HEK293 (cell line): ENCODE measurements at regions of chr6 and their contacts with region 1.

Region 1: GRCh38 chr6:36759148-36759759 is 61.6 kb downstream of the RAB44 start:
- H3K4me3 ChIP-seq: no peak overlapping the region
- H3K27ac ChIP-seq: no peak overlapping the region
- H3K4me1 ChIP-seq: no peaks in the 10 kb centered on the region; the same call in 1 of the 2 replicates
- CTCF ChIP-seq: peak; percentile 66

Region 2: GRCh38 chr6:36219081-36219480 is 540.2 kb before region 1 on chr6:
- CTCF ChIA-PET with region 1: no interaction called
- POLR2A ChIA-PET with region 1: no interaction called
- H3K4me3 ChIP-seq: no peak overlapping the region
- H3K27ac ChIP-seq: no peak overlapping the region
- H3K4me1 ChIP-seq: no peaks in the 10 kb centered on the region
- CTCF ChIP-seq: no peak

Region 3: GRCh38 chr6:36340618-36341454 is 418.4 kb before region 1 on chr6:
- CTCF ChIA-PET with region 1: no interaction called
- POLR2A ChIA-PET with region 1: no interaction called
- H3K4me3 ChIP-seq: no peak overlapping the region
- H3K27ac ChIP-seq: no peak overlapping the region
- H3K4me1 ChIP-seq: no peaks in the 10 kb centered on the region
- CTCF ChIP-seq: peak; percentile 77

Region 4: GRCh38 chr6:36605560-36606391 is 153.5 kb before region 1 on chr6:
- CTCF ChIA-PET with region 1: interaction called, 156 read pairs
- POLR2A ChIA-PET with region 1: no interaction called
- H3K4me3 ChIP-seq: no peak overlapping the region
- H3K27ac ChIP-seq: no peak overlapping the region
- H3K4me1 ChIP-seq: no peaks in the 10 kb centered on the region
- CTCF ChIP-seq: no peak

Region 5: DNA sequence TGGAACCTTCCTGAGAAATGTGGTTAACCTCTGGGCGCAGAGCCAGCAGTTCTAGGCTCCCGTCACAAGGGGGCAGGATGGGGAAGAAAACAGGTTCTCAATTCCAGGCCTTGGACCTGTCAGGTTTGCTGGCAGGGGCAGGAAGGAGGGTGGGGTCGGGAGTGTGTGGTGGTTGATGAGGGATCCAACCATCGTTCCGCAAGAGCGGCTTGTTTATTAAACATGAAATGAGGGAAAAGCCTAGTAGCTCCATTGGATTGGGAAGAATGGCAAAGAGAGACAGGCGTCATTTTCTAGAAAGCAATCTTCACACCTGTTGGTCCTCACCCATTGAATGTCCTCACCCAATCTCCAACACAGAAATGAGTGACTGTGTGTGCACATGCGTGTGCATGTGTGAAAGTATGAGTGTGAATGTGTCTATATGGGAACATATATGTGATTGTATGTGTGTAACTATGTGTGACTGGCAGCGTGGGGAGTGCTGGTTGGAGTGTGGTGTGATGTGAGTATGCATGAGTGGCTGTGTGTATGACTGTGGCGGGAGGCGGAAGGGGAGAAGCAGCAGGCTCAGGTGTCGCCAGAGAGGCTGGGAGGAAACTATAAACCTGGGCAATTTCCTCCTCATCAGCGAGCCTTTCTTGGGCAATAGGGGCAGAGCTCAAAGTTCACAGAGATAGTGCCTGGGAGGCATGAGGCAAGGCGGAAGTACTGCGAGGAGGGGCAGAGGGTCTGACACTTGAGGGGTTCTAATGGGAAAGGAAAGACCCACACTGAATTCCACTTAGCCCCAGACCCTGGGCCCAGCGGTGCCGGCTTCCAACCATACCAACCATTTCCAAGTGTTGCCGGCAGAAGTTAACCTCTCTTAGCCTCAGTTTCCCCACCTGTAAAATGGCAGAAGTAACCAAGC is 135.5 kb before region 1 on chr6:
- CTCF ChIA-PET with region 1: interaction called, 156 read pairs
- POLR2A ChIA-PET with region 1: interaction called, 5 read pairs
- H3K4me3 ChIP-seq: no peak overlapping the region
- H3K27ac ChIP-seq: no peak overlapping the region
- H3K4me1 ChIP-seq: no peaks in the 10 kb centered on the region; the same call in 1 of the 2 replicates
- CTCF ChIP-seq: peak; percentile 92

Region 6: DNA sequence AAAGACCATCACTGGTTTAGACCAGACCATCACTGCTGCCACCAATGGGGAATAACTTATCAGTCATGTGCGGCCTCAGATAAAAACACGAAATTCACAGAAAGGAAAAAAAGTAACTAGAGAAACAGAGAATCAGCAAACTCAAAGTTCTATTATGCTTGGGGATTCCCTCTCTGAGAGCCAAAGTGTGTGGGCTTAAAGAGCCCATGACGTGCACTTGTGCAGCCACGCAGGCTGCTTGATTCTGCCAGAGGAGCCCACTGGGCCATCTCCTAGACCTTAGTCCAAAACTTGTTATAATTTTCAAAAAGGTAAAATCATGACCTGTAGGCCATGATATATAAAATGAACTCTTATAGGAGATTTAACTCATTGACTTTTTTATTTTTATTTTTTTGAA is 46.4 kb before region 1 on chr6:
- CTCF ChIA-PET with region 1: interaction called, 19 read pairs
- POLR2A ChIA-PET with region 1: no interaction called
- H3K4me3 ChIP-seq: no peak overlapping the region
- H3K27ac ChIP-seq: no peak overlapping the region
- H3K4me1 ChIP-seq: no peaks in the 10 kb centered on the region
- CTCF ChIP-seq: no peak

Region 7: GRCh38 chr6:36735110-36736071 is 23.9 kb before region 1 on chr6:
- CTCF ChIA-PET with region 1: interaction called, 25 read pairs
- POLR2A ChIA-PET with region 1: no interaction called
- H3K4me3 ChIP-seq: no peak overlapping the region
- H3K27ac ChIP-seq: no peak overlapping the region
- H3K4me1 ChIP-seq: no peaks in the 10 kb centered on the region
- CTCF ChIP-seq: no peak

Region 8: GRCh38 chr6:36780442-36781177 is 21.4 kb after region 1 on chr6:
- CTCF ChIA-PET with region 1: interaction called, 182 read pairs
- POLR2A ChIA-PET with region 1: interaction called, 3 read pairs
- H3K4me3 ChIP-seq: no peak overlapping the region
- H3K27ac ChIP-seq: no peak overlapping the region
- H3K4me1 ChIP-seq: no peaks in the 10 kb centered on the region
- CTCF ChIP-seq: no peak

Region 9: GRCh38 chr6:36874443-36875249 is 115.4 kb after region 1 on chr6 and contains the start of gene PPIL1:
- CTCF ChIA-PET with region 1: interaction called, 22 read pairs
- POLR2A ChIA-PET with region 1: no interaction called
- H3K4me3 ChIP-seq: peak within 1 kb of the TSS; percentile 86
- H3K27ac ChIP-seq: peak within 1 kb of the TSS; percentile 99
- H3K4me1 ChIP-seq: no peaks in the 10 kb centered on the region
- CTCF ChIP-seq: peak; percentile 74

Region 10: DNA sequence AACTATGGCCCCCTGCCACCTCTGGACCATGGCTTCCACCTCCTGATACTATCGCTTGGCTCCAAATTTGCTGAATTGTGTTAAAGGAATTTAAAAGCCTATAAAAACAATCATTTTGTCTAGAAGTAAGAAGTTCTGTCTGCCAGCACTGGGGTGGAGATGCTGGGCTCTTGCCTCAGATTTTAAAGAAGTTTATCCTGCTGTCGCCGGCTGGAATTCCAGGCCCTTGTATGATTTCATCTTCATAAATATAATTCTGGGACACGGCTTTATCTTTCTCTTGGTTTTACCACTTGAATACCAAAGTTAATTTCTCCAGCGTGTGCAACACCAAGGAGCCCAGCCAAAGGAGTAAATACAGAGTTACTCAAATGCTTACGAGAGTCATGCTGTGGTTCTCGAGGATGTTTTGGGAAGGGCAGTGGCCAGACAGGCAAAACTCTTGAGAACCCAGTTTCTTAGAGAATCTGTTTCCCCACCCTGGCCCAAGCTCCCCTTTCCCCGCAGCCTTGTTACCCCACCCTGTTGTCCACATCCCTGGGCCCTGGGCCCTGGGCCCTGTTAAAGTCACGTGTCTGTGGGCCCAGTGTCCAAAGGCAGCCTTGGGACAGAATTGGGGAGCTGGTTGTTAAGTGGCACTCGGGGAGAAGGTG is 158.4 kb after region 1 on chr6:
- CTCF ChIA-PET with region 1: no interaction called
- POLR2A ChIA-PET with region 1: no interaction called
- H3K4me3 ChIP-seq: no peak overlapping the region
- H3K27ac ChIP-seq: no peak overlapping the region
- H3K4me1 ChIP-seq: no peaks in the 10 kb centered on the region
- CTCF ChIP-seq: no peak